ENCODE measurements at regions of chr4 and their contacts with region 1.

Region 1: DNA sequence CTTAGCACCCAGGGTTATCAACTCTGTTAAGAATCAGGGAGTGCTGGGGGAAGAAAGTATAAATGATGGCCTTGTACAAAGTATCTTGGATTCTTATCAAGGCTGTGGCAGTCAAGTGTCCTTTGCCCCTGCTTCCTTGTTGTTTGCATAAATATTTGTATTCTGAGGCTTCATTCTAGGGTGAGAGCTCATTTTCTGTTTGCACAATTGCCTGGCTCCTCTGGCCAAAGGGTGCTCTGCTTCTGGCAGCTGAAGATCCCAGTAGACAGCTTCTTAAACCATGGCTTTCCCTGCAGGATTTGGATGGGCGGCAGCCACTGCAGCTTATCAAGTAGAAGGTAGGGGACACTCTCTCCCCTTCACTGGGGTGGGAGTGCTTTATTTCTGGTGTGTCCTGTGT is at the start of gene GBA3:
- DNase-seq: no peak
- CTCF ChIP-seq: no peak

Region 2: GRCh38 chr4:22410645-22411247 is 282.0 kb before region 1 on chr4:
- in situ Hi-C with region 1: loop called (anchors 10 kb)
- DNase-seq: no peak
- CTCF ChIP-seq: peak; percentile 30

Region 3: DNA sequence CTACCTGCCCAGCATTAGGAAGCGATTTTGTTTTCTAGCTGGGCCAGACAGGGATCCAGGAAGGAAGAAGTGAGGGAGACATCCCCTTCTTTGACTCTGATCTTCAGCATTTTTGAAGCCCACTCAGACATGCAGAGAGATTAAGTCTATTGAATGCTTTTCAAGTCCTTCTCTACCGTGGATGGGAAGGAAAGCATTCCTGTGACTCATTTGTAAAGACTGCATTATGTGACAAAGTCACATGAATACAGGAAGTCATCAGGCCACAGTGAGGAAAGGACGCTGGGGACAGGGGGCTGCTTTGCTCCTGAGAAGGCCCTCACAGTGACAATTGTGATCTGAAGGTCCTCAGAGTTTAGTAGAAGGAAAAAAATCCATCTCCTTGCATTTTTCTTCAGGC is 67.4 kb before region 1 on chr4:
- in situ Hi-C with region 1: no loop called
- DNase-seq: no peak
- CTCF ChIP-seq: no peak

Region 4: DNA sequence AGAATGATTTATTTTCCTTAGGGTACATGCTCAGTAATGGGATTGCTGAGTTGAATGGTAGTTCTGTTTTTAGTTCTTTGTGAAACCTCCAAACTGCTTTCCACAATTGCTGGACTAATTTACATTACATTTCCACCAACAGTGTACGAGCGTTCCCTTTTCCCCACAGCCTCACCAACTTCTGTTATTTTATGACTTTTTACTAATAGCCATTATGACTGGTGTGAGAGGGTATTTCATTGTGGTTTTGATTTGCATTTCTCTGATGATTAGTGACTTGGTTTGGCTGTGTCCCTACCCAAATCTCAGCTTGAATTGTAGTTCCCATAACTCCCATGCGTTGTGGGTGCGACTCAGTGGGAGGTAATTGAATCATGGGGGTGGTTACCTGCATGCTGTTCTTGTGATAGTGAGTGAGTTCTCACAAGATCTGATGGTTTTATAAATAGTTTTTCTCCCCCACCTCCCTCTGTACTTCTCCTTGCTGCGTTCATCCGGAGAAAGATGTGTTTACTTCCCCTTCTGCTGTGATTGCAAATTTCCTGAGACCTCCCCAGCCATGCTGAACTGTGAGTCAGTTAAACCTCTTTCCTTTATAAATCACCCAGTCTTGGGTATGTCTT is 95.1 kb after region 1 on chr4:
- in situ Hi-C with region 1: no loop called
- DNase-seq: no peak
- CTCF ChIP-seq: no peak

Region 5: GRCh38 chr4:23097251-23097650 is 404.5 kb after region 1 on chr4:
- in situ Hi-C with region 1: no loop called
- DNase-seq: no peak
- CTCF ChIP-seq: no peak

Region 6: GRCh38 chr4:23268072-23268771 is 575.5 kb after region 1 on chr4:
- in situ Hi-C with region 1: no loop called
- DNase-seq: no peak
- CTCF ChIP-seq: no peak